AG04450 (cell line): ENCODE measurements at regions of chr2 and their contacts with region 1.

Region 1: DNA sequence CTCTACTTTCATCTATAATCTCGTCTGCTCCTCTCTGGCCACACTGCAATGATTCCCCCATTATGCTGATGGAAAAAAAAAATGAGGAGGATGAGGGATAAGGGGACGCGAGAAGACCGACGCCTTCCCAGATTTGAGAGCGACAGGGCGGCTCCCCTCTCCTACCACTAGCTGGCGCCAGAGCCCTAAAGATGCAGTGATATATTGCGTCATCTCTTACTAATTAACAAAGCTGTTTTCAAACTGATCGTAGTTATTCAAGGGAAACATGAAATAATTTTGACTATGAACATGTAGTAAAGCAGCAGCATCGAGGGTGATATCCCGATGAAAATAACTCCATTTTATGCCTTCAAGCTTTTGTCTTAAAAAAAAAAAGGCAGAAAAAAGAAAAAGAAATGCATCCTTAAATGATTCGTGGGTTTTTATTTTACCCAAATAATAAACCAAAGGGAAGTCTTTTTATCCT is 48.0 kb upstream of the HNRNPA3 start:
- DNase-seq: no peak
- H3K4me3 ChIP-seq: peak overlapping the region; percentile 42
- H3K27ac ChIP-seq: no peak overlapping the region
- H3K27me3 ChIP-seq: no peaks in the 10 kb centered on the region
- CTCF ChIP-seq: peak; percentile 100

Region 2: DNA sequence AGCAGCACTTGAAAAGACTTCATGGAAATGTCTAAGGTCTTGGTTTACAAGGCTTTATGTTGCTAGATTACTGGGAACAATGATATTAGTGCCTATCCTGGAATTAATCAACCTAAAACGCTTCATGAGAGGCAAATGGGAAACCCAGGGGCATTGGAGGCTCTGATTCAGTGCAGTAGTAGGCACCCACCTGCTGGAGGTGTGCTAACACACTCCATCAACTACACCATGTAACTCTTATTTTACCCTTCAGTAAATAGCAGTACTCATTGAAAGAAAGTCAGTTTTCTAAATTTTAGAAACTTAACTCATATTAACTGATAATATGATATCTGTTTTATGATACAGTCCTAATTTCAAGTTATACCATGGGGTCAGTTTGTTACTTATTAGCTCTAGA is 30.6 kb after region 1 on chr2:
- CTCF ChIA-PET with region 1: interaction called, 11 read pairs
- POLR2A ChIA-PET with region 1: no interaction called
- DNase-seq: no peak
- H3K4me3 ChIP-seq: no peak overlapping the region
- H3K27ac ChIP-seq: no peak overlapping the region
- H3K27me3 ChIP-seq: no peaks in the 10 kb centered on the region
- CTCF ChIP-seq: no peak

Region 3: DNA sequence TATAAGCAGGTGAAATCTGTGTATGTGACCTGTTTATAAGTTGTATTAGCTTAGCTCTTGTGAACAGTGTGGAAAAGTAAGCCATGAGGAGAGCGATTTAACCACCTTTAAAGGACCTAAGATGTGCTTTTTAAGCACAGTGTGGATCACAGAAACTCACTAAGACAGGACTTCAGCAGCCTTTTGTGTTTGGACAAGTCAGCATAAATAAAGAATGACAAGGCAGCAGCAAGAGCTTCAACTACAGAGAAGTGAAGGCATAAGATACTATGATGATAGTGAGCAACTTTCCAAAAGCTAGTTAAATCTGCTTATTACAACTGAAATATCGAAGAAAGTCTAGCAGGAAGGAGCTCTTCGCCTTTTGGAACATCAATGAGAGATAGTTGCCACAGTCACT is 56.9 kb after region 1 on chr2:
- CTCF ChIA-PET with region 1: interaction called, 69 read pairs
- POLR2A ChIA-PET with region 1: interaction called, 6 read pairs
- DNase-seq: no peak
- H3K4me3 ChIP-seq: no peak overlapping the region
- H3K27ac ChIP-seq: no peak overlapping the region
- H3K27me3 ChIP-seq: no peaks in the 10 kb centered on the region
- CTCF ChIP-seq: no peak

Region 4: GRCh38 chr2:177263451-177264208 is 99.0 kb after region 1 on chr2:
- CTCF ChIA-PET with region 1: interaction called, 34 read pairs
- POLR2A ChIA-PET with region 1: interaction called, 25 read pairs
- DNase-seq: peak; percentile 92
- H3K4me3 ChIP-seq: peak overlapping the region; percentile 80
- H3K27ac ChIP-seq: peak overlapping the region; percentile 99
- H3K27me3 ChIP-seq: no peaks in the 10 kb centered on the region
- CTCF ChIP-seq: peak; percentile 85

Region 5: GRCh38 chr2:177392373-177393202 is 228.0 kb after region 1 on chr2 and contains the start of gene AGPS:
- CTCF ChIA-PET with region 1: interaction called, 23 read pairs
- POLR2A ChIA-PET with region 1: no interaction called
- DNase-seq: no peak
- H3K4me3 ChIP-seq: peak within 1 kb of the TSS; percentile 78
- H3K27ac ChIP-seq: no peak within 1 kb of the TSS
- H3K27me3 ChIP-seq: no peaks in the 10 kb centered on the region
- CTCF ChIP-seq: 0 out of 2 replicates have a peak, but pooled peaks have one; percentile 1
- polyA plus RNA-seq, gene AGPS: 15.1 and 22.6 TPM in 2 replicates

Region 6: DNA sequence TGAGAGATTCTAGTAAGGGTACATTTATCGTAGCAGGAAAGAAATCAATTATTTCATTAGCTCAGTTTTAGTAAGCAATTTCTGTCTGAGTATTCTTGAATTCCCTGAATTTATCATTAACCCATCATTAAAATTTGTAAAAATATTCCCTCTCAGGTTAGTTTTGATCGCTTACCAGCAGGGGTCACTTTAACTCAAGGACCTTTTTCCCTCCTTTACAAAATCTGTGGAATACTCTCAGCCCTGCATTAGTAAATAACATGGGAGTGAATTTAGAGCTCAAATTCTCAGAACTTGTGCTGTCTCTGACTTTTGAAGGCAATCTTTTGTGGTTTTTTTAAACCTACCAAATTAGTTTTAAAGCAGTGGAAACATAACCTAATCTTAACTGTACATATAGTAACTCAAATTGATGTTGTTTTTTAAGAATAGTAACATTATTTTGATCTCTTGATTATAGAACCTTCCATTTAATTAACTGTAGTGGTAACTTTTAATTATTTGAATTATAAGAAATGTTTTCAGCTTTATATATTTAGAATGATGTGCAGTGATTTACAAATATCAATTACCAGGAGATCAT is 325.2 kb after region 1 on chr2:
- CTCF ChIA-PET with region 1: interaction called, 20 read pairs
- POLR2A ChIA-PET with region 1: no interaction called
- DNase-seq: no peak
- H3K4me3 ChIP-seq: no peak overlapping the region
- H3K27ac ChIP-seq: no peak overlapping the region
- H3K27me3 ChIP-seq: no peaks in the 10 kb centered on the region
- CTCF ChIP-seq: peak; percentile 77

Region 7: DNA sequence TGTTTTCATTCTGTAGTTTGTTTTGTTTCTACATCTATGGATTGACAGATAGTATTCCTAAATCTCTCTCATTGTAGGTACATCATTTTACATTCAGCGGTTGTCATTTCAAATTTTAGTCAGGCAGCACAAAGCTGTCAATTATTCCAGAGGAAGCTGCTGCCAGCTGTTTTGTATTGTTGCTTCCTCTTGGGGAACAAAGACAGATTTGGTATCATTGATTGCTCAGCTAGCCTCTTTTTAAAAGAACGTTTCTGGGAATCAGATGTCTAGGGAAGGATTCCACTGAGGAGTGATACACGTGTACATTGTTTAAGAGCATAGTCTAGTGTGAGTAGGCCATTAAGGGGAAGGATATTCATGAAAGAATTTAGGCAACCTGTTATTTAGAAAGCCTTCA is 373.7 kb after region 1 on chr2:
- CTCF ChIA-PET with region 1: no interaction called
- POLR2A ChIA-PET with region 1: no interaction called
- DNase-seq: no peak
- H3K4me3 ChIP-seq: no peak overlapping the region
- H3K27ac ChIP-seq: no peak overlapping the region
- H3K27me3 ChIP-seq: no peaks in the 10 kb centered on the region
- CTCF ChIP-seq: no peak

Region 8: GRCh38 chr2:177763532-177764265 is 599.1 kb after region 1 on chr2:
- CTCF ChIA-PET with region 1: interaction called, 15 read pairs
- POLR2A ChIA-PET with region 1: no interaction called
- DNase-seq: peak; percentile 29
- H3K4me3 ChIP-seq: peak overlapping the region; percentile 21; the same call in 1 of the 2 replicates
- H3K27ac ChIP-seq: no peak overlapping the region
- H3K27me3 ChIP-seq: no peaks in the 10 kb centered on the region
- CTCF ChIP-seq: peak; percentile 80